Heart left ventricle (tissue), 16 donors: ENCODE measurements at regions of chr1 and their contacts with region 1.

Region 1: DNA sequence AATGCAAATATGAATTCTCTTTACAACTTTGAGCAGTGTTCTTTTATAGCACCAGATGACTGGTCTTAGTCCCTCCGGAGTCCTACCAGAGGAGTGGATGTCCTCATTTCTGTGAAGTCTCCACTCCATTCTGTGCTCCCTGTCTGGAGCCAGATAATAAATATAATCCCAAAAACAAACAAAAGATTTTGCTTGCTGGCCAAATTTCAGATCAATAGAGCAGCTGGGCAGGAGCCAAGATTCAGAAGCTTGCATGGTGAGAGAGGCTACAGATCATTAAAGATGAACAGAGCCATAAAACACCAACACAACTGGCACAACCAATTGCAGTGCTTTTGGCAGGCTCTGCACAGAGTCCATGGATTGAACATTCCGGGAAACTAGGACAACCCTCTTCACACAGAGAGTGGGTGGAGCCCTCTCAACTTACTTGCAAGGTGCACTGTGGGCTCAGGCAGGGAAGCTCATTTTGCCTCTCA is 231.5 kb upstream of the SNX7 start:
- DNase-seq: no peak
- ATAC-seq: no peak
- H3K4me3 ChIP-seq: no peak overlapping the region
- H3K27ac ChIP-seq: no peak overlapping the region
- H3K4me1 ChIP-seq: no peaks in the 10 kb centered on the region
- H3K27me3 ChIP-seq: no peaks in the 10 kb centered on the region
- CTCF ChIP-seq: no peak
- POLR2A ChIP-seq: no peak

Region 2: DNA sequence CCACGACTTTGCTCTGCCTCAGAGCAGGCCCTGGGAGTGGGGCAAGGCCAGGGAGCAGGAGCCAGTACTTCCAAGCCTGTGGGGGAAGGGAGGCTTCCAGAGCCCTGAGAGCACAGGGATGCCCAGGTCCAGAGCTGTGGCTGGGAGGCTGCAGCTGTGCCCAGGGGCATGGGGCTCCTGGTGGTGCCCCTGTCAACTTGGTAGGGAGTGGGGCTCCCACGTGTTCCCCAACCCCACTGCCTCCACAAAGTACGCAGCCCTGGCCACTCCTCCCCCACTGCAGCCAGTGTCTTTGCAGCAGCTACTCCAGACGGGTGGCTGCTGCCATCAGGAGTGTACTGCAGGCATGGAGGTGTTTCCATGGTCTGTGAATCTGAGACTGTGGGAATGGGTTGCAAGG is 62.6 kb before region 1 on chr1:
- intact Hi-C with region 1: loop called in 1 of 10 experiments (anchors 10 kb)
- DNase-seq: peak in 1 of 5 donors; percentile 45
- ATAC-seq: peak in 1 of 4 donors; percentile 34
- H3K4me3 ChIP-seq: no peak overlapping the region
- H3K27ac ChIP-seq: no peak overlapping the region
- H3K4me1 ChIP-seq: peaks cover 0 to 7% (median 0%) of the 10 kb centered on the region in 12 donors
- H3K27me3 ChIP-seq: no peaks in the 10 kb centered on the region
- CTCF ChIP-seq: no peak
- POLR2A ChIP-seq: no peak

Region 3: DNA sequence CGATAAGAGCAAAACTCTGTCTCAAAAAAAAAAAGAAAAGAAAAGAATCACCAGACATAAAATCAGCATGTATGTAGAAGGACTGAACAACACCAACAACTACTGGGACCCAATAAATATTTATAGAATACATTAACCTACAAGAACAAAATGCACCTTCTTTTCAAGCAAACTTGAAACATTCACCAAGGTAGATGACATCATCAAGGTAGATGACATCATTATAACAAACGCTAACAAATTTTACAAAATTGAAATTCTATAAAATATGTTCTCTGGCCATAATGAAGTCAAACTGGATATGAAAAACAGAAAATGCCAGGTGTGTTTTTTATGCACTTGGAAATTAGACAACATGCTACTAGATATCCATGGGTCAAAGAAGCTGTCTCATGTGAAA is 11.3 kb after region 1 on chr1:
- intact Hi-C with region 1: no loop called
- DNase-seq: no peak
- ATAC-seq: no peak
- H3K4me3 ChIP-seq: no peak overlapping the region
- H3K27ac ChIP-seq: no peak overlapping the region
- H3K4me1 ChIP-seq: no peaks in the 10 kb centered on the region
- H3K27me3 ChIP-seq: no peaks in the 10 kb centered on the region
- CTCF ChIP-seq: no peak
- POLR2A ChIP-seq: no peak

Region 4: GRCh38 chr1:98480271-98480670 is 50.3 kb after region 1 on chr1:
- intact Hi-C with region 1: loop called in 1 of 10 experiments (anchors 10 kb)
- DNase-seq: no peak
- ATAC-seq: no peak
- H3K4me3 ChIP-seq: no peak overlapping the region
- H3K27ac ChIP-seq: no peak overlapping the region
- H3K4me1 ChIP-seq: no peaks in the 10 kb centered on the region
- H3K27me3 ChIP-seq: peaks cover 0 to 4% (median 0%) of the 10 kb centered on the region in 9 donors
- CTCF ChIP-seq: no peak
- POLR2A ChIP-seq: no peak